ENCODE measurements at regions of chr2 and their contacts with region 1.

Region 1: GRCh38 chr2:182586432-182586831 is 129.6 kb upstream of the DNAJC10 start:
- DNase-seq: no peak
- H3K4me3 ChIP-seq: no peak overlapping the region
- H3K27ac ChIP-seq: no peak overlapping the region
- H3K4me1 ChIP-seq: no peaks in the 10 kb centered on the region
- H3K27me3 ChIP-seq: no peaks in the 10 kb centered on the region
- CTCF ChIP-seq: no peak
- POLR2A ChIP-seq: no peak

Region 2: DNA sequence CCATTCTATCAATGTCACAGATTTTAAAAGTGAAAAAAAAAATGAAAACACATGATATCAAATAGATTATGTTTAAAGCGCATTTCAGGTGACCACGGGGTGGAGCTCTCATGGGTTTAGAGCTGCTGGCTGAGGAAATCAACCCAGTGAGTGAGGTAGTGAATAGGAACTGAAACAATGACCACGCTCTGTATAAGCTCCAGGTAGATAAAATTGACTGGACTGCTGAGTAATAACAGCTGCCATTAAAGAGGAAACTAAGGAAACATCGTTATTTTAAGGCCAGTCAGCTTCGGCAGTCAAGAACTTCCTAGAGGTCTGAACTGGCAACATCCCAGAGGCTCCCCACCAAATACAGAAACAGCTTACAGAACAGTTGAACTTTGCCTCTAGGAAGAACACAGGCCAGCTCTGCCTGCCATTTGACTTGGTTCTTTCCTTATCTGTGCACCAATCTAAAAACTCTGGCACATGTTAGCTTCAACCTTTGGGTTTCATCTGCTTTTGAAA is 345.5 kb before region 1 on chr2:
- CTCF ChIA-PET with region 1: interaction called, 9 read pairs
- POLR2A ChIA-PET with region 1: no interaction called
- dilution Hi-C with region 1: no loop called
- intact Hi-C with region 1: loop called (anchors 1 kb)
- DNase-seq: peak; percentile 69
- H3K4me3 ChIP-seq: no peak overlapping the region
- H3K27ac ChIP-seq: no peak overlapping the region
- H3K4me1 ChIP-seq: peaks cover 4% of the 10 kb centered on the region
- H3K27me3 ChIP-seq: no peaks in the 10 kb centered on the region
- CTCF ChIP-seq: peak; percentile 25 to 36
- POLR2A ChIP-seq: no peak

Region 3: GRCh38 chr2:182545420-182546167 is 40.8 kb before region 1 on chr2:
- CTCF ChIA-PET with region 1: no interaction called
- POLR2A ChIA-PET with region 1: no interaction called
- dilution Hi-C with region 1: no loop called
- intact Hi-C with region 1: no loop called
- DNase-seq: peak; percentile 65
- H3K4me3 ChIP-seq: no peak overlapping the region
- H3K27ac ChIP-seq: peak overlapping the region; percentile 22
- H3K4me1 ChIP-seq: peaks cover 53% of the 10 kb centered on the region
- H3K27me3 ChIP-seq: no peaks in the 10 kb centered on the region
- CTCF ChIP-seq: no peak
- POLR2A ChIP-seq: no peak

Region 4: GRCh38 chr2:183436014-183436413 is 849.6 kb after region 1 on chr2:
- CTCF ChIA-PET with region 1: no interaction called
- POLR2A ChIA-PET with region 1: no interaction called
- dilution Hi-C with region 1: no loop called
- intact Hi-C with region 1: no loop called
- DNase-seq: no peak
- H3K4me3 ChIP-seq: no peak overlapping the region
- H3K27ac ChIP-seq: no peak overlapping the region
- H3K4me1 ChIP-seq: no peaks in the 10 kb centered on the region
- H3K27me3 ChIP-seq: no peaks in the 10 kb centered on the region
- CTCF ChIP-seq: no peak
- POLR2A ChIP-seq: no peak

Measured in endothelial cell of umbilical vein (primary cell).